Natural killer cell (primary cell): ENCODE measurements at regions of chr13 and their contacts with region 1.

Region 1: GRCh38 chr13:21458813-21459701 is at the start of gene ZDHHC20:
- DNase-seq: peak; percentile 94 to 95
- ATAC-seq: peak; percentile 91 to 97 (median 92)
- H3K4me3 ChIP-seq: peak within 1 kb of the TSS; percentile 65
- H3K4me3 Mint-ChIP-seq: peak within 1 kb of the TSS; percentile 94
- H3K27ac ChIP-seq: peak within 1 kb of the TSS; percentile 80
- H3K27ac Mint-ChIP-seq: peak within 1 kb of the TSS; percentile 88 to 91
- H3K4me1 ChIP-seq: peaks cover 8% of the 10 kb centered on the region
- H3K4me1 Mint-ChIP-seq: peaks cover 34 to 39% of the 10 kb centered on the region in 2 donors
- H3K27me3 ChIP-seq: no peaks in the 10 kb centered on the region
- H3K27me3 Mint-ChIP-seq: no peaks in the 10 kb centered on the region
- CTCF ChIP-seq: no peak
- total RNA-seq, gene ZDHHC20: 85.1 to 116 (median 93.4) TPM

Region 2: GRCh38 chr13:21297914-21298831 is 160.9 kb before region 1 on chr13:
- intact Hi-C with region 1: loop called (anchors 1 kb)
- DNase-seq: peak; percentile 79 to 95
- ATAC-seq: peak; percentile 95 to 100 (median 98)
- H3K4me3 ChIP-seq: peak overlapping the region; percentile 66
- H3K4me3 Mint-ChIP-seq: peak overlapping the region; percentile 95
- H3K27ac ChIP-seq: peak overlapping the region; percentile 56
- H3K27ac Mint-ChIP-seq: peak overlapping the region; percentile 76 to 89
- H3K4me1 ChIP-seq: peaks cover 14% of the 10 kb centered on the region
- H3K4me1 Mint-ChIP-seq: peaks cover 23 to 24% of the 10 kb centered on the region in 2 donors
- H3K27me3 ChIP-seq: no peaks in the 10 kb centered on the region
- H3K27me3 Mint-ChIP-seq: peaks cover 0 to 2% of the 10 kb centered on the region in 2 donors
- CTCF ChIP-seq: peak; percentile 80

Region 3: GRCh38 chr13:21365574-21365973 is 93.5 kb before region 1 on chr13:
- intact Hi-C with region 1: loop called (anchors 1 kb)
- DNase-seq: peak; percentile 31 to 64
- ATAC-seq: peak; percentile 80 to 90 (median 83)
- H3K4me3 ChIP-seq: no peak overlapping the region
- H3K4me3 Mint-ChIP-seq: peak overlapping the region; percentile 41
- H3K27ac ChIP-seq: peak overlapping the region; percentile 64
- H3K27ac Mint-ChIP-seq: peak overlapping the region; percentile 84 to 86
- H3K4me1 ChIP-seq: peaks cover 37% of the 10 kb centered on the region
- H3K4me1 Mint-ChIP-seq: peaks cover 18 to 42% of the 10 kb centered on the region in 2 donors
- H3K27me3 ChIP-seq: no peaks in the 10 kb centered on the region
- H3K27me3 Mint-ChIP-seq: no peaks in the 10 kb centered on the region
- CTCF ChIP-seq: no peak

Region 4: DNA sequence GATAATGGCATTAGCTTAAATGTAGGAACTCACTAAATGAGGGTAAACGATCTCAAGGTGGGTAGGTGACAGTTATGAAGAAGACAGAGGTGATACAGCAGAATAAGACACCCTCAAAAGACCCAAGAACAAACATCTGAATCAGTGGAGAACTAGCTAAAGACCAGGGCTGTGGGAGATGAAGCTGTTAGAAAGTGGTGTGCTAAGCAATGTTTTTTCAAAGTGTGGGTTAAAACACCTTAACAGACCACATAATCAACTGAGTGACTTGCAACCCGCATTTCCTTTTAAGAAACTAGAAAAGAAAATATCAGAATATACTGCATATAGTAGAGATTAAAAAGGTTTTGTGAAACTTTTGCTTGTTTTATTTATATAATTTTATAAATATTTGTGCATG is 69.9 kb before region 1 on chr13:
- intact Hi-C with region 1: no loop called
- DNase-seq: peak in 1 of 2 donors; percentile 17
- ATAC-seq: peak; percentile 80 to 94 (median 83)
- H3K4me3 ChIP-seq: no peak overlapping the region
- H3K4me3 Mint-ChIP-seq: peak overlapping the region; percentile 49
- H3K27ac ChIP-seq: peak overlapping the region; percentile 62
- H3K27ac Mint-ChIP-seq: peak overlapping the region; percentile 81 to 88
- H3K4me1 ChIP-seq: peaks cover 12% of the 10 kb centered on the region
- H3K4me1 Mint-ChIP-seq: peaks cover 32 to 35% of the 10 kb centered on the region in 2 donors
- H3K27me3 ChIP-seq: no peaks in the 10 kb centered on the region
- H3K27me3 Mint-ChIP-seq: no peaks in the 10 kb centered on the region
- CTCF ChIP-seq: no peak

Region 5: DNA sequence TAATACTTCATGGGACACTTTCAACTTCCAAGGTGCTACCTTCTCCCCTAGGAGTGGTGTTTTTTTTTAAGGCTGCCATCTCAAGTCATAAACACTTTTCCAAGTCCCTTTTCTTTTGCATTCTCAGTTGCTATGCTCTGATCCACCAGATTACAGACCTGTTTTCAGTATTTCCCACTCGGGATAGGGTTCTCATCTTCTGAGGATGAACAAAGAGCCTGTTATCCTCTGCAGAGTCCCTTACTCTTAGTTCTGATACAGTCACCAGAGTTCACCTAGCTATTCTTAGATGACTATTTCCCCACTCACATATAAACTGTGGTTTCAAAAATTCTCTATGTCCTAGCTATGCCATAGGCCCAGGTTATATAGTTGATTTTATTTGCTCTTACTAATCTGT is 15.9 kb before region 1 on chr13:
- intact Hi-C with region 1: loop called (anchors 2 kb)
- DNase-seq: no peak
- ATAC-seq: no peak
- H3K4me3 ChIP-seq: no peak overlapping the region
- H3K4me3 Mint-ChIP-seq: no peak overlapping the region
- H3K27ac ChIP-seq: no peak overlapping the region
- H3K27ac Mint-ChIP-seq: peak overlapping the region; percentile 63 to 73
- H3K4me1 ChIP-seq: peaks cover 2% of the 10 kb centered on the region
- H3K4me1 Mint-ChIP-seq: peaks cover 64 to 70% of the 10 kb centered on the region in 2 donors
- H3K27me3 ChIP-seq: no peaks in the 10 kb centered on the region
- H3K27me3 Mint-ChIP-seq: no peaks in the 10 kb centered on the region
- CTCF ChIP-seq: no peak